A549 (cell line): ENCODE measurements at regions of chr2 and their contacts with region 1.

Region 1: GRCh38 chr2:45643543-45644542 is 7.6 kb upstream of the PRKCE start:
- DNase-seq: peak; percentile 61 to 90
- ATAC-seq: peak; percentile 94 to 99
- H3K4me3 ChIP-seq: peak overlapping the region; percentile 63
- H3K27ac ChIP-seq: peak overlapping the region; percentile 89 to 93
- H3K4me1 ChIP-seq: peaks cover 15% of the 10 kb centered on the region
- CTCF ChIP-seq: peak; percentile 99
- EP300 ChIP-seq: no peak
- POLR2A ChIP-seq: no peak
- RAD21 ChIP-seq: peak; percentile 94 to 100

Region 2: GRCh38 chr2:45627911-45628310 is 15.9 kb before region 1 on chr2:
- CTCF ChIA-PET with region 1: interaction called, 23 read pairs
- POLR2A ChIA-PET with region 1: no interaction called
- DNase-seq: no peak
- ATAC-seq: no peak
- H3K4me3 ChIP-seq: no peak overlapping the region
- H3K27ac ChIP-seq: no peak overlapping the region
- H3K4me1 ChIP-seq: no peaks in the 10 kb centered on the region
- CTCF ChIP-seq: no peak
- EP300 ChIP-seq: no peak
- POLR2A ChIP-seq: no peak
- RAD21 ChIP-seq: no peak

Region 3: DNA sequence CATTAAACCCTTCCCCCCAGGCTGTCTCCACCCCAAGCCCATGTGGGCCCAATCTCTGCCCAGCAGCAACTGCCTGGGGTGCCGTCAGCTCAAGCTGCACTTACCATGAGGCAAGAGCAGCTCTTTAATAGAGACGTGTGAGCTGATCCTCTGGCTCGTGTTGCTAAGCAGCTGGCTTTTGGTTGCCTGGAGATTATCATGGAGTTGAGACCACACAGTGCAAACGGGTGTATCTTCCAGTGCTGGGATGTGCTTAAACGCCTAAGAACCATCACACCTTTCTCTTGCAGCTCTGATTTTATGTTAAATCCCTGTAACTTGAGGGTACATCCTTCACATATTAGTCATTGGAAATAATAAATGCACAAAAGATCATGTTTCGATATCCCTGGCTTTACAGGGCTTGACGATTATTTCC is 278.7 kb after region 1 on chr2:
- CTCF ChIA-PET with region 1: interaction called, 11 read pairs
- POLR2A ChIA-PET with region 1: no interaction called
- DNase-seq: no peak
- ATAC-seq: no peak
- H3K4me3 ChIP-seq: no peak overlapping the region
- H3K27ac ChIP-seq: no peak overlapping the region
- H3K4me1 ChIP-seq: no peaks in the 10 kb centered on the region
- CTCF ChIP-seq: no peak
- EP300 ChIP-seq: no peak
- POLR2A ChIP-seq: no peak
- RAD21 ChIP-seq: no peak